ENCODE measurements at regions of chr5 and their contacts with region 1.

Region 1: GRCh38 chr5:178279725-178280438 is 47.3 kb upstream of the PHYKPL start:
- DNase-seq: peak; percentile 48 to 81
- H3K4me3 ChIP-seq: no peak overlapping the region
- H3K27ac ChIP-seq: no peak overlapping the region
- H3K4me1 ChIP-seq: no peaks in the 10 kb centered on the region
- H3K27me3 ChIP-seq: peaks cover 95% of the 10 kb centered on the region
- CTCF ChIP-seq: peak; percentile 87

Region 2: GRCh38 chr5:178304761-178305645 is 25.1 kb after region 1 on chr5:
- CTCF ChIA-PET with region 1: no interaction called
- POLR2A ChIA-PET with region 1: no interaction called
- intact Hi-C with region 1: no loop called
- DNase-seq: no peak
- H3K4me3 ChIP-seq: no peak overlapping the region
- H3K27ac ChIP-seq: no peak overlapping the region
- H3K4me1 ChIP-seq: no peaks in the 10 kb centered on the region
- H3K27me3 ChIP-seq: peaks cover 94% of the 10 kb centered on the region
- CTCF ChIP-seq: no peak

Region 3: GRCh38 chr5:178551059-178551458 is 271.2 kb after region 1 on chr5:
- CTCF ChIA-PET with region 1: no interaction called
- POLR2A ChIA-PET with region 1: no interaction called
- intact Hi-C with region 1: loop called (anchors 1 kb)
- DNase-seq: peak in 1 of 2 experiments; percentile 45
- H3K4me3 ChIP-seq: no peak overlapping the region
- H3K27ac ChIP-seq: no peak overlapping the region
- H3K4me1 ChIP-seq: no peaks in the 10 kb centered on the region
- H3K27me3 ChIP-seq: peaks cover 85% of the 10 kb centered on the region
- CTCF ChIP-seq: peak; percentile 56

Region 4: DNA sequence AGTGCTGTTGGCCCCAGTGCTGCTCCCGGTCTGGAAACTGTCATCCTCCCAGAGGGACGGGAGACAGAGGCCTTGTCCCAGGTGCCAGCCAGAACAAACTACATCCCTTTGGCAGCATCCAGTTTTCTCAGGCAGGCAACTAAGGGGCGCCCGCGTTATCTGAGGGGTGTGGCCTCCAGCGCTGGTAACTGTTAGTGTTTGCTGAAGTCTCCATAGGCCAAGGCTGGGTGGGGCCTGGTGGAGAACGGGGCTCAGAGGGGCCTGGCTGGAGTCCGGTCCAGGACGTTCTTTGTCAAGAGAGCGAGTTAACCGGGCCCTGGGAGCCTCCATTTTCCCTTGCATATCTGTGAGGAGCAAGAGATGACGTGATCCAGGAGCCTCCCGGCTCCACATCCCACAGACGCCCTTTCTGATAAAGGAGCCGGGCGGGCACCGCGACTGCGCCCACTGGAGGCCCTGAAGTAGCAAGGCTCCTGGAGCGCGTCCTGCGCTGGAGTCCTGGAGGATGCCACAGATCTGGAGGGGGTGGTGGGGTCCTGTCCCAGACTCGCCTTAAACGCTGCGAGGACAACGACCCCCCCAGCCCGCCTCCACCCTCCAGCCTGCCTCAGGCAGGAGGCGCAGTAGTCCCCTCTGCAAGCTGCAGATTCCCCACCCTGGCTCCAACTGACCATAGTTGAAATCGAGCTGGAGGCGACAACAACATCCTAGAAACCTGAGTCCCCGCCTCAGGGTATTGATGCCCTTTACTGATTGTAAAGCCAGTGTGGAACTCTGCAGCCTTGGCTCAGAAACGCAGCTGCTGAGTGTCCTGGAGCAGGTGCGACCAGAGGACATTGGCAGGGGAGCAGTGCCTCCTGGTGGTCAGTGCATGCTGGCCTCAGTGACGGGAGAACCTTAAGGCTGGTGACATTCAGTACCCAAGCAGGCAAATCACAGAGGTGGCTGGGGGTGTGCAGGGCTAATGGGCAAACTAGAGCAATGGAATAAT is 559.1 kb after region 1 on chr5:
- CTCF ChIA-PET with region 1: no interaction called
- POLR2A ChIA-PET with region 1: no interaction called
- intact Hi-C with region 1: loop called (anchors 5 kb)
- DNase-seq: peak; percentile 68 to 75
- H3K4me3 ChIP-seq: no peak overlapping the region
- H3K27ac ChIP-seq: no peak overlapping the region
- H3K4me1 ChIP-seq: no peaks in the 10 kb centered on the region
- H3K27me3 ChIP-seq: peaks cover 3% of the 10 kb centered on the region; the same call in 1 of the 2 replicates
- CTCF ChIP-seq: peak; percentile 71

Measured in PC-9 (cell line).